K562 (cell line): ENCODE measurements at regions of chr11 and their contacts with region 1.

Region 1: GRCh38 chr11:57761301-57762234 is at the start of gene CTNND1:
- DNase-seq: peak; percentile 66 to 99 (median 81)
- ATAC-seq: peak; percentile 93
- H3K4me3 ChIP-seq: peak within 1 kb of the TSS; percentile 62
- H3K27ac ChIP-seq: peak within 1 kb of the TSS; percentile 95
- H3K4me1 ChIP-seq: peaks cover 7 to 22% of the 10 kb centered on the region in 2 experiments; a peak in 4 of 5 replicates
- H3K27me3 ChIP-seq: no peaks in the 10 kb centered on the region
- CTCF ChIP-seq: no peak
- EP300 ChIP-seq: peak; percentile 67
- POLR2A ChIP-seq: peak; percentile 94
- RAD21 ChIP-seq: no peak
- polyA plus RNA-seq, gene CTNND1: 11.1 to 23.8 TPM

Region 2: DNA sequence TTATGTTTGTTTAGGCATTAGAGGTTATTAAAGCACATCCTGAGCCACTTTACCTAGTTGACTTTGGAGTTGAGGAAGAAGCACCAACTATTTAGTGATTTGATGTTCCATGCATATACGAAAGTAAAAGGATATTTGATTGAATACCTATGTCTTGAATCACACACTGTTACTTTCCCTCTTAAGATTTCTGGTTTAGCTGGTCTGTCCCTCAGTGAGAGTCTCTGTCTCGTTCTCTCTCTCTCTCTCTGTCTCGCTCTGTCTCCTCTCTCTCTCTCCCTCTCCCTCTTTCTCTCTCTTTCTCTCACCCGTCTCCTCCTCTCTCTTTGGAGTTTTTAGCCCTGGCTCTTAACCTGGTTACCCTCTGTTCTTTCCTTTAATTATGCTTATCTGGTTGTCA is 11.0 kb after region 1 on chr11:
- CTCF ChIA-PET with region 1: no interaction called
- POLR2A ChIA-PET with region 1: interaction called, 88 read pairs
- in situ Hi-C with region 1: no loop called
- intact Hi-C with region 1: no loop called
- DNase-seq: no peak
- ATAC-seq: no peak
- H3K4me3 ChIP-seq: no peak overlapping the region
- H3K27ac ChIP-seq: no peak overlapping the region
- H3K4me1 ChIP-seq: peaks cover 7 to 25% of the 10 kb centered on the region in 2 experiments; a peak in 4 of 5 replicates
- H3K27me3 ChIP-seq: no peaks in the 10 kb centered on the region
- CTCF ChIP-seq: no peak
- EP300 ChIP-seq: no peak
- POLR2A ChIP-seq: no peak
- RAD21 ChIP-seq: no peak

Region 3: GRCh38 chr11:57778318-57779037 is 16.9 kb after region 1 on chr11:
- CTCF ChIA-PET with region 1: no interaction called
- POLR2A ChIA-PET with region 1: interaction called, 88 read pairs
- in situ Hi-C with region 1: no loop called
- intact Hi-C with region 1: loop called (anchors 2 kb)
- DNase-seq: peak; percentile 61 to 73 (median 69)
- ATAC-seq: peak; percentile 69
- H3K4me3 ChIP-seq: no peak overlapping the region
- H3K27ac ChIP-seq: peak overlapping the region; percentile 4; the same call in 1 of the 3 replicates
- H3K4me1 ChIP-seq: peaks cover 26 to 72% of the 10 kb centered on the region in 2 experiments
- H3K27me3 ChIP-seq: no peaks in the 10 kb centered on the region
- CTCF ChIP-seq: no peak
- EP300 ChIP-seq: 0 out of 2 replicates have a peak, but pooled peaks have one; percentile 9
- POLR2A ChIP-seq: no peak
- RAD21 ChIP-seq: no peak